ENCODE measurements at regions of chr1 and their contacts with region 1.

Region 1: GRCh38 chr1:67500413-67500959 is 70.3 kb upstream of the SERBP1 start:
- DNase-seq: peak; percentile 80
- H3K4me3 Mint-ChIP-seq: no peak overlapping the region
- H3K27ac Mint-ChIP-seq: no peak overlapping the region
- H3K4me1 Mint-ChIP-seq: peaks cover 8% of the 10 kb centered on the region
- H3K27me3 Mint-ChIP-seq: peaks cover 4% of the 10 kb centered on the region

Region 2: DNA sequence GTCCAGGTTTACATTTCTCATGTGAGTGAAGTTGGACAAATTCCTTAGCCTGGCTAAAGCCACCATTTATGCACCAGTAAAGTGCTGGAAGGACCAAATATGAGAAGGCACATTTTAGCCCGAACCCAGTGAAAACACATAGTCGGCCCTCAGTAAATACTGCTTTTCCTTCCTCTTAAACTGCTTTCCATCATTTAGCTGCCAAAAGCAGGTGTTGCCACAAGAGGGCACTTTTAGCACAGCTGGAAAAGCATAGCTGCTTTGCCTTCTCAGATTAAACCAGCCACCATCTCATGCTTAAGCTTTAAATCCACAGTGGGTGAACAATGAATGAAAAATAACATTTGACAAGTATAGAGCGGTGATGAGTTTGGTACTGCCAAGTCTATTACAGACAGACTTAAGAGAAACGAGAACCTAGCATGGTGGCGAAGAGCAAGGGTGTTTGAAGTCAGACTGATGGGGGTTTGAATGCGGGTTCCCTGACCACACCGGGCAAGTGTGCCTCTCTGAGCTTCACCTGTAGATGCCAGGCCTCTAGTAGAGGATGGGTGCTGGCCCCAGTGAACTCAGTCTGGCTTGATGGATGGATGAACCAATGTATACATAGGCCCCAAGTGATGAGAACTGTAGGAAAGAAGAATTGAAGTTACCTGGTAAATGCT is 504.3 kb before region 1 on chr1:
- intact Hi-C with region 1: loop called (anchors 1 kb)
- DNase-seq: peak; percentile 49
- H3K4me3 Mint-ChIP-seq: no peak overlapping the region
- H3K27ac Mint-ChIP-seq: no peak overlapping the region
- H3K4me1 Mint-ChIP-seq: peaks cover 15% of the 10 kb centered on the region
- H3K27me3 Mint-ChIP-seq: no peaks in the 10 kb centered on the region

Region 3: DNA sequence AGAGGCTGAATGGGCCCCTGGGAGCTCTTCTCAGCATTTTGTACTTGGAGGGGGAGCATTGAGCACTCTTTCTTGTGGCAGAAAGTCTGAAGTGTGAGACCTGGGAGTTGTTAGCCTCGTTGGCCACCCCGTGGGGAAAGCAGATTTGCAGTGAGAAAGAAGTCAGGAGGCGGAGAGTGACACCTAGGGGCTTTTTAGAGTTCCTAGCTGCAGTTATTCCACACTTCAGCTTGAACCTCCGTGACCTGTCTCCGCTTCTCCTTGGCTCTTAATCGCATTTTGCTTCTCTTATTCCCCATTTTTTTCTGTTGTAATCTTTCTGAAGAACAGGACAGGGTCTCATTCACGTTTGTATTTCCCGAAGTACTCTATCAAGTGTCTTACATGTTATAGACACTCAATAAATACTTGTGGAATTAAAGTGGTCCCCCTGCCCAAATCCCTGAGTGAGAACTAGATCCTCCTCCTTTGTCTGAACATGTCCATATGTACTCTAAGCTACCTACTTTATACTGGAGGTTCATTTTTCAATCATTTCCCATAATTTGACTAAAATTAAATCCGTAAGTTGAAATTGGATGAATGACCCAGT is 351.2 kb before region 1 on chr1:
- intact Hi-C with region 1: loop called (anchors 5 kb)
- DNase-seq: peak; percentile 31
- H3K4me3 Mint-ChIP-seq: no peak overlapping the region
- H3K27ac Mint-ChIP-seq: no peak overlapping the region
- H3K4me1 Mint-ChIP-seq: peaks cover 33% of the 10 kb centered on the region
- H3K27me3 Mint-ChIP-seq: peaks cover 25% of the 10 kb centered on the region

Region 4: GRCh38 chr1:67214420-67215174 is 285.9 kb before region 1 on chr1:
- intact Hi-C with region 1: loop called (anchors 1 kb)
- DNase-seq: no peak
- H3K4me3 Mint-ChIP-seq: no peak overlapping the region
- H3K27ac Mint-ChIP-seq: no peak overlapping the region
- H3K4me1 Mint-ChIP-seq: peaks cover 32% of the 10 kb centered on the region
- H3K27me3 Mint-ChIP-seq: no peaks in the 10 kb centered on the region

Region 5: GRCh38 chr1:67230539-67230938 is 269.9 kb before region 1 on chr1:
- intact Hi-C with region 1: loop called (anchors 1 kb)
- DNase-seq: no peak
- H3K4me3 Mint-ChIP-seq: no peak overlapping the region
- H3K27ac Mint-ChIP-seq: no peak overlapping the region
- H3K4me1 Mint-ChIP-seq: peaks cover 6% of the 10 kb centered on the region
- H3K27me3 Mint-ChIP-seq: no peaks in the 10 kb centered on the region

Region 6: DNA sequence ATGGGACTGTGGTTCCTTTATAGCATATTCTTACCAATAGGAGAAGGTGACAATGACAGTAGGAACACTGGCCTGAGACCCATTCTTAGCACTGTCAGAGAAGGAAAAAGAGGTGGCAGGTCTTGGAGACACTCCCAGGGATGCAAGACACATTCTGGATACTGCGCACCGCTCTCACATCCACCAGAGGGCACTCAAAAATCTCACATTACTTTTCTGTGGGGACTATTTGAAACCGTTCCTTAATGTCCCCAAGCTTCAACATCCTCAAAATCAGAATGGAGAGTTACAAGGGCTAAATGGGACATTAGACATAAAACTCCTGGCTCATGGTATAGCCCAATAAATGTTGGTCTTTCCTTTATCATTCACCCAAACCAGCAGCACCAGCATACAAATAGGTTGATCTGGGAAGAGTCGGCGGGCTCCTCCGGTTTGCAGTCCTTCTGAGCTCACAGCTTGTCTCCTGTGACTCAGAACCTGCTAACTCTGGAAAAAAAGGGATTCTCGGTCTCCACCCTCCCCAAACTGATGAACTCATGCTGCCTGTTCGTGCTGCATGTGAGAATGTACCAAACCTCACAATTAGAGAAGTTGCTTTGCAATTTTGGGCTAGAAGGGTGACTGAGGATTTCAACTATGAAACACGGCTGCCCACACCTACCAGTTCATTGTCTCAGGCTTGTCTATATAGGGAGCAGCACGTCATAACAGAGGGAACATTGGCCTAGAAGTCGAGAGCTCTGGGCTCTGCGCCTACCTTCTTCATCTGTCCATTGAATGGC is 152.6 kb before region 1 on chr1:
- intact Hi-C with region 1: loop called (anchors 2 kb)
- DNase-seq: no peak
- H3K4me3 Mint-ChIP-seq: no peak overlapping the region
- H3K27ac Mint-ChIP-seq: no peak overlapping the region
- H3K4me1 Mint-ChIP-seq: peaks cover 27% of the 10 kb centered on the region
- H3K27me3 Mint-ChIP-seq: no peaks in the 10 kb centered on the region

Region 7: DNA sequence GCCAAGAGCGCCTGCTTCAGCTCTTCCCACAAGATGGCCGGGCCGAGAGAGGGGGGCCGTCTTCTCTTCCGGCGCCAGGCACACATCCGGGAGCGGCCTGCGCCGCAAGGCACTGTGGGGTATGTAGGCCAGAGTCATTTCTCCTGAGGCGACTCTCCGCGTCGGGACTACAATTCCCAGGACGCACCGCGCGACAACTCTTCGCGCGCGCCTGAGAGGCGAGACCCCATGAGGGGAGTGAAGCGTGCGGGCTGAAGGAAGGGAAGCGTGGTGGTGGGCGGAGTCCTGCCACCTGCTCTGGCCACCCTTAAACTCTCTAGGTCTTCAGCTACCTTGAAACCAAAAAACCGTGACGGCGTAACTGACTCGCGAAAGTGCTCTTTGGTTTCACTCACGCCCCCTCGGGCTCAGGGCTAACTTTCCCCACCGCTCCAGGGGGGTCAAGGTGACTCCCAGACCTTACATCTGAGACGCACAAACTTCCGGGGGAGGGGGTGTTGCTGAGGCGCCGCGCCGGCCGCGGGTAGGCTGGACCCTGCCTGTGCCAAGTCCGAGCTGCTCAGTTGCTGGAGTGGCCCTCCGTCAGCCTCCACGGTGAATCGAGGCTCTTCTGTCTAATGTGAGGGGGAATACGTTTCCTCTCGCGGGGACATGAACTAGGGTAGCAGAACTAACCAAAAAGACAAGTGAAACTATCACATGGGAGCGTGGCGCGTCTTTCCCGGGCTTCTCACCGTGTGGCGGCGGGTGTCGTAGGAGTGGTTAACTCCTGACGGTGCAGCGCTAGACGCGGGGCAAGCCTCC is 69.9 kb before region 1 on chr1 and contains the start of gene SERBP1:
- intact Hi-C with region 1: loop called (anchors 2 kb)
- DNase-seq: peak; percentile 95
- H3K4me3 Mint-ChIP-seq: peak within 1 kb of the TSS; percentile 87
- H3K27ac Mint-ChIP-seq: peak within 1 kb of the TSS; percentile 95
- H3K4me1 Mint-ChIP-seq: peaks cover 48% of the 10 kb centered on the region
- H3K27me3 Mint-ChIP-seq: no peaks in the 10 kb centered on the region
- total RNA-seq, gene SERBP1: 484 and 491 TPM in 2 replicates

Region 8: DNA sequence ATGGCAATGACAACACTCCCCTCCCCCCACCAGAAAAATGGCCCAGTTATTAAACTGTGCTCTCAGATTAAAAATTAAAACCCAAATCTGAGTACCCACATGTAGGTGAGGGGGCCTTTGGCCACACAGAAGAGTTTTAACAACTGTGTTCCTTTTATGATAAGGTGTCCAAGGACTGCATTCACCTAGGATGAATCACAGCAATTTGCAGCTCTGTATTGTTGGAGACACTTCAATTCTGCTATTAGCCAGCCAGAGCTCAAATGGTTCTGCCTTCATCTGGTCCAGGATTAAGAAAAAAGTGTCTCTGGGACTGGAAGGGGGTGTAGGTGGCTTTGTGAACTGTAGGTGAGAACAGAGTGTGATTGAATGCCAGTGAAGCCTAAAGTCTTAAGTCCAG is 593.3 kb after region 1 on chr1:
- intact Hi-C with region 1: no loop called
- DNase-seq: no peak
- H3K4me3 Mint-ChIP-seq: no peak overlapping the region
- H3K27ac Mint-ChIP-seq: no peak overlapping the region
- H3K4me1 Mint-ChIP-seq: no peaks in the 10 kb centered on the region
- H3K27me3 Mint-ChIP-seq: no peaks in the 10 kb centered on the region